ENCODE measurements at regions of chr11 and their contacts with region 1.

Region 1: DNA sequence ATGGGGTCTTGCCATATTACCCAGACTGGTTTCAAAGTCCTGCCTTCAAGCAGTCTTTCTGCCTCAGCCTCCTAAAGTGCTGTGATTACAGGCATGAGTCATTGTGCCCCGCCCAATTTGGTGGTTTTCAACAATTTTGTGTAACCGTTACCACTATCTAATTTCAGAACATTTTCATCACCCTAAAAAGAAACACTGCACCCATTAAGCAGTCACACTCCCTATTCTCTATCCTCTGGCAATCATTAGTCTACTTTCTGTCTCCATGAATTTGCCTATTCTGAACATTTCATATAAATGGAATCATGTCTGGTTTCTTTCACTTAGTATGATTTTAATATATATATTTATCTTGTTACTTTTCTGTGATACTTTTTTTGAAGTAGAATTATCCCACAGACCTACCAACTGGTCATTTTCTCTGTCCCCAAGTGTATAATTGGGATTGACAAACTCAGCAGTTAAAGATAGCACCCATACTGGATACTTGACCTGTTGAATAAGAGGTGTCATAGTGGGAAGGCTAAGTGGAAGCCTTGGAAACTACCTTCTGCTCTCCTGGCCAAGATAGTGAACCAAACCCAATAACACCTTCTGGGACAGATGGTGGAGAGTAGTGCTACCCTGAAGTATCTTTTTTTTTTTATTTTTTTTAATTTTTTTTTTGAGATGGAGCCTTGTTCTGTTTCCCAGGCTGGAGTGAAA is 64.8 kb downstream of the STIM1 start:
- DNase-seq: peak; percentile 88
- ATAC-seq: peak; percentile 71
- H3K4me3 Mint-ChIP-seq: no peak overlapping the region
- H3K27ac Mint-ChIP-seq: peak overlapping the region; percentile 55
- H3K4me1 Mint-ChIP-seq: peaks cover 65% of the 10 kb centered on the region
- H3K27me3 Mint-ChIP-seq: no peaks in the 10 kb centered on the region

Region 2: GRCh38 chr11:3860375-3860774 is 59.9 kb before region 1 on chr11:
- CTCF ChIA-PET with region 1: interaction called, 3 read pairs
- POLR2A ChIA-PET with region 1: no interaction called
- intact Hi-C with region 1: loop called in 1 of 2 experiments (anchors 1 kb)
- DNase-seq: peak; percentile 70
- ATAC-seq: peak; percentile 62
- H3K4me3 Mint-ChIP-seq: peak overlapping the region; percentile 88
- H3K27ac Mint-ChIP-seq: peak overlapping the region; percentile 98
- H3K4me1 Mint-ChIP-seq: peaks cover 73% of the 10 kb centered on the region
- H3K27me3 Mint-ChIP-seq: no peaks in the 10 kb centered on the region

Region 3: DNA sequence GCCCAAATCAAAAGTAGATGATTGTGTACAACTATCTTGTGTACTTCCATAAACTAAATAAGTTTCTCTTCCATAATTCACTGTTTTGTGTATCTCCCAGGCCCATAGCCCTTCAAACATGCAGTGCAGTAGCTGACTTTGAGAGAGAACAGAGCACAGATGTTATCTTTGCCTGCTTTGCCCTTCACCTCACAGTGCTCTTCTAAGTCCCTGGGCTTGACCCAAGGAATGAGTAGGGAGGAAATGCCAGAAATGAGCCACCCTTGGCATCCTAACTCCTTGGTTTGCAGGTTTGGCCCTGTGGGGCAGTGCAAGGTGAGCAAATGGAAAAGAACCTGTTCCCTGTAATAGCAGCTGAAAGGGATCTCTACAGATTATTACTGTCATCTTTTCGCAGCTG is 14.4 kb after region 1 on chr11:
- CTCF ChIA-PET with region 1: interaction called, 5 read pairs
- POLR2A ChIA-PET with region 1: no interaction called
- intact Hi-C with region 1: loop called in 1 of 2 experiments (anchors 2 kb)
- DNase-seq: no peak
- ATAC-seq: no peak
- H3K4me3 Mint-ChIP-seq: no peak overlapping the region
- H3K27ac Mint-ChIP-seq: peak overlapping the region; percentile 3
- H3K4me1 Mint-ChIP-seq: peaks cover 54% of the 10 kb centered on the region
- H3K27me3 Mint-ChIP-seq: no peaks in the 10 kb centered on the region

Region 4: GRCh38 chr11:3969613-3970012 is 49.3 kb after region 1 on chr11:
- CTCF ChIA-PET with region 1: no interaction called
- POLR2A ChIA-PET with region 1: interaction called, 10 read pairs
- intact Hi-C with region 1: no loop called
- DNase-seq: peak; percentile 59
- ATAC-seq: peak; percentile 77
- H3K4me3 Mint-ChIP-seq: peak overlapping the region; percentile 26
- H3K27ac Mint-ChIP-seq: peak overlapping the region; percentile 92
- H3K4me1 Mint-ChIP-seq: peaks cover 77% of the 10 kb centered on the region
- H3K27me3 Mint-ChIP-seq: no peaks in the 10 kb centered on the region

Region 5: DNA sequence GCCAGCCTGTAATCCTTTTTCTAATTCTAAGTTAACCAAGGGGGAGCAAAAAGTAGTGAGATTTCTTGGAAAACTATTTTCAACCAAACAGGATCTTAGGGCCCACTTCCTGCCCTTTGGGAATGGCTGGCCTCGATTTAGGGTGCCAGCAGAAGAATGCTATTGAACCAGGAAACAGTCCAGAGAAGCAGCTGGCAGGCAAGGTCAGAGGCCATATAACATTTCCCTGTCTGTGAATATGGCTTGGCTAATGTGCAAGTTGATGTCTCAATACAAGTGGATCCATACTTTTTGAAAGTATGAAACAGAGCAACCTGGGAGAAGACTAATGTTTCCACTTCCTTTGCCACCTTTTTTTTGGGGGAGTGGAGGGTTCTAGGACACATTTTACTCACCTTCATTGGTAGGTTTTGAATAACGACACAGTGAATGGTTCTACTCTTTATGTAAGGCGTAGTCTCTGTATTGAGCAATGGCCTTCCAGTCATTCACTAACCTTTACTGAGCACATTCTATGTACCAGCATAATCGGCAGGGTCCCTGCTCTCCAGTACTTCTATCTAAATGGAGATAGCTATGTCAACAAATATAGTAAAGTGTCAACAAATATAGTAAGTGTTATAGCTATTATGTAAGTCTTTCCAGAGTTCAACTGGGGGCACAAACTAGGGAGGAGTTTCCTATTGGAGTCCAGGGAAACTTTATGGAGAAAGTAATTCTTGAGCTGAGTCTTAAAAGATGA is 140.1 kb after region 1 on chr11:
- CTCF ChIA-PET with region 1: interaction called, 3 read pairs
- POLR2A ChIA-PET with region 1: no interaction called
- intact Hi-C with region 1: loop called in 1 of 2 experiments (anchors 1 kb)
- DNase-seq: no peak
- ATAC-seq: no peak
- H3K4me3 Mint-ChIP-seq: no peak overlapping the region
- H3K27ac Mint-ChIP-seq: no peak overlapping the region
- H3K4me1 Mint-ChIP-seq: peaks cover 37% of the 10 kb centered on the region
- H3K27me3 Mint-ChIP-seq: no peaks in the 10 kb centered on the region